ENCODE measurements at regions of chr1 and their contacts with region 1.

Region 1: GRCh38 chr1:207052911-207053769 is at the start of gene PFKFB2:
- DNase-seq: peak; percentile 88 to 99 (median 98)

Region 2: GRCh38 chr1:206992790-206993189 is 60.4 kb before region 1 on chr1:
- intact Hi-C with region 1: no loop called
- DNase-seq: no peak

Region 3: DNA sequence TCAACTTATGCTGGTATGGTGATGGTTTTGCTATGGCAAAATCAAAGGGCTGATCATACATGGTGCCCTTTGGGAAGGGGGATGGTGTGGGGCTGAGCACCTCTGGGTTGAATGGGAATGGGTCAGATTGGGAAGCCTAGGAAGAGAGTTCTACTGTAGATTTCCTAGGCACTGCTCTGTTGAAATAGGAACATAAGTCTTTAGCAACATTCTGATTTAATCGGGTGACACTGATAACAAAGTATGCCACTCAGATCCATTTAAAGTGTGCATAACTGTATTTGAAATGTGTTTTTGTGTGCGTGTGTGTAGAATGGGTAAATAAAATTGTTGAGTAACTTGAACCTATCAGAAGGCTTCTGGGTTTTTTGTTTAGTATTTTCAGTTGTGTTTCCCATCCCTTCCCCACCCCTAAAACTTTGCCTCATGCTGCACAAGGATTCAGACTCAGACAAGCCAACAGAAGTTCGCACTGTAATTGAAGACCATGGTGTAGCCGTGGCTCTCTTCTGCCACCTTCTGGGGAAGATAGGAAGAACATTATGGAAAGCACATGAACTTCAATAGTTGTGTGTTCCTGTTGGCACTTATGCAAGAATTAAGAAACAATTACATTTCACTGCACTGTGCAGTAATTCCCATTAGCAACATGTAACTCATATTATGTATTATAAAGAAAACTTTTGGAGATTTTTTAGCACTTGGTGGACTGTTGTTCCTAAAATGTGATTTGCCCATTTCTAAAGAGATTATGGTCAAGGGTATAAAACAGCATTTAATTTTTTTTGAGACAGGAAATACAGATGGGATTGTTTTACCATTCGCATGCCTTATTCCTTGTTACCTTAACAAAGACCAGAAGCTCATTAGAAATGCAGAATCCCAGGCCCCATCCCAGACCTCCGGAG is 24.6 kb after region 1 on chr1:
- intact Hi-C with region 1: loop called (anchors 2 kb)
- DNase-seq: peak in 6 of 10 donors; percentile 28 to 86 (median 54)

Region 4: GRCh38 chr1:207218512-207219362 is 165.6 kb after region 1 on chr1:
- intact Hi-C with region 1: no loop called
- DNase-seq: no peak

Region 5: GRCh38 chr1:207321079-207321789 is 268.1 kb after region 1 on chr1 and contains the start of gene CD55:
- intact Hi-C with region 1: loop called (anchors 10 kb)
- DNase-seq: peak; percentile 69 to 98 (median 84)

Region 6: DNA sequence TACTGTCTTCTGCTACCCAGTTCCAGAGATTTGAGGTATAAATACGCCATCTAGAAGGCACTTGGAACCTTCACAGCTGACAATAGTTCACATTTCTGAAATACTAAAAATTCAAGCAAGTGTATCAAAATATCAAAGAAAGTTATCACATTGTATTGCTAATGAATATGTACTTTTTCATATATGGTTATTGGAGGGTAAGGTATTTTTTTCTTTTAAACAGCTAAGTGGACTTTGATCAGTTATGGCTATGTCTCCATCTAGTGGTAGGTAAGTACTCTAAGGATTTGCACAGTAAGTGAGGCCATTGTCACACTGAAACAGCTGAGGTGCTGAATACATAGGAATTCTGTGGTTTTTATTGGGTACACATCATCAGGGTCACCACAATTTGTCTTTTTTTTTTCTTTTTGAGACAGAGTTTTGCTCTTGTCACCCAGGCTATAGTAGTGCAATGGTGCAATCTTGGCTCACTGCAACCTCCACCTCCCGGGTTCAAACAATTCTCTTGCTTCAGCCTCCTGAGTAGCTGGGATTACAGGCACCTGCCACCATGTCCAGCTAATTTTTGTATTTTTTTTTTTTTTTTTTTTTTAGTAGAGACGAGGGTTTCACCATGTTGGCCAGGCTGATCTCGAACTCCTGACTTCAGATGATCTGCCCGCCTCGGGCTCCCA is 351.8 kb after region 1 on chr1:
- intact Hi-C with region 1: loop called (anchors 10 kb)
- DNase-seq: peak in 1 of 10 donors; percentile 68

Region 7: DNA sequence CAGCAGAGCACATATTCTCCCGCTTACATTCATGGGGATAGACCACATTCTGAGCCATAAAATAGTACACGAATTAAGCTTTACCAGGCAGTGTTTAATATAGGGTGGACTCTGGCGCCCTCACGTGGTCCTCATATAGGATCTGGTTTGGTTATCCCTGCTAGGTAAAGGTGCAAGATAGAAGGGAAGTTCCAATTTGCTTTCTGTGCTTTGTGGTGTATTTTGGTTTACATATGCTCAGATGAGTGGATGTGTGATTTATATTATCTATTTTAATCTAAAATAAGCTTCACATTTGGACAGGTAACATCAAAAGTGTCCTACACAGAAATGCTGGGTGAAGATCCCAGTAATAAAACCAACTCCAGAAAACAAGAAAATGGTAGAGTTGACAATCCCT is 446.4 kb after region 1 on chr1:
- intact Hi-C with region 1: loop called (anchors 5 kb)
- DNase-seq: peak; percentile 39 to 96 (median 72)

Measured in posterior cingulate gyrus (tissue), 11 donors.